CD14-positive monocyte (primary cell): ENCODE measurements at regions of chr5 and their contacts with region 1.

Region 1: GRCh38 chr5:32585446-32586275 is at the start of gene SUB1:
- DNase-seq: peak; percentile 92 to 93 (median 92)
- H3K4me3 ChIP-seq: peak within 1 kb of the TSS; percentile 61 to 97 (median 87)
- H3K4me3 Mint-ChIP-seq: peak within 1 kb of the TSS; percentile 99
- H3K27ac ChIP-seq: peak within 1 kb of the TSS; percentile 98
- H3K27ac Mint-ChIP-seq: peak within 1 kb of the TSS; percentile 91 to 99 (median 96)
- H3K4me1 ChIP-seq: peaks cover 60 to 67% of the 10 kb centered on the region in 2 donors
- H3K4me1 Mint-ChIP-seq: peaks cover 64% of the 10 kb centered on the region
- H3K27me3 ChIP-seq: no peaks in the 10 kb centered on the region
- H3K27me3 Mint-ChIP-seq: peaks cover 0 to 2% (median 0%) of the 10 kb centered on the region in 3 donors
- CTCF ChIP-seq: no peak
- polyA plus RNA-seq, gene SUB1: 74.3 to 454 (median 399) TPM

Region 2: DNA sequence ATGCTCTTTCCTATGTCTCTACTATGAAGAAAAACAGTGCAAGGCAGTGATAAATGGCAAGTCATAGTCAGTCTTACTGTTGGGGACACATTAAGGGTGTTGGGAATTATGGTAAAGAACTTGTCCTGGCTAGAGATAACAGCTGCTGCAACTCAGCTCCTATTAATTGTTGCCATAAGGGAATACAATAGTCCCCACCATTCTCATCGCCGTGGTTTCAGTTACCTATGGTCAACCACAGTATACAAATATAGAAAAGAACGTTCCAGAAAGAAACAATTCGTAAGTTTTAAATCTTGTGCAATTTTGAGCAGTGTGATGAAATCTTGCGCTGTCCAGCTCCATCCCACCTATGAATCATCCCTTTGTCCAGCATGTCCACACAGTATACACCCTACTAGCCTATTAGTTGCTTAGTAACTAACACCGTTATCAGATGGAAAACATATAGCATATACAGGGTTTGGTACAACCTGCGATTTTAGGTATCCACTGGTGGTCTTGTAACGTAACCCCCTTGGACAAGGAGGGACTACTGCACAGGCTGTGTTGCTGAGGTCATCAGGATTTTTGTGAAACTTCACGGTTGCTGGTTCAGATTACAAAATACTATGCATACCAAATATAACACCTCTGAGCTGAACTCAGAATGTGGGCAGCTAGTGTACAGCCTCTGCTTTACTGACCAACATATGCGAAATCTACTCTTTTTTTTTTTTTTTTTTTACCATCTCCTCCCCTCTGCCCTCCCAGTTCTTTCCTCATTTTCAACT is 194.7 kb before region 1 on chr5:
- intact Hi-C with region 1: loop called in 1 of 2 experiments (anchors 10 kb)
- DNase-seq: peak; percentile 80 to 92 (median 90)
- H3K4me3 ChIP-seq: no peak overlapping the region
- H3K4me3 Mint-ChIP-seq: peak overlapping the region in 1 of 2 donors; percentile 35
- H3K27ac ChIP-seq: peak overlapping the region; percentile 52 to 85
- H3K27ac Mint-ChIP-seq: peak overlapping the region; percentile 78 to 98 (median 98)
- H3K4me1 ChIP-seq: peaks cover 41 to 49% of the 10 kb centered on the region in 2 donors
- H3K4me1 Mint-ChIP-seq: peaks cover 39% of the 10 kb centered on the region
- H3K27me3 ChIP-seq: no peaks in the 10 kb centered on the region
- H3K27me3 Mint-ChIP-seq: no peaks in the 10 kb centered on the region
- CTCF ChIP-seq: no peak

Region 3: GRCh38 chr5:32444431-32445286 is 141.0 kb before region 1 on chr5 and contains the start of gene ZFR:
- intact Hi-C with region 1: loop called in 1 of 2 experiments (anchors 5 kb)
- DNase-seq: peak; percentile 90 to 93 (median 90)
- H3K4me3 ChIP-seq: peak within 1 kb of the TSS; percentile 65 to 90 (median 76)
- H3K4me3 Mint-ChIP-seq: peak within 1 kb of the TSS; percentile 84 to 93
- H3K27ac ChIP-seq: peak within 1 kb of the TSS; percentile 64 to 89
- H3K27ac Mint-ChIP-seq: peak within 1 kb of the TSS; percentile 87 to 95 (median 92)
- H3K4me1 ChIP-seq: peaks cover 39 to 47% of the 10 kb centered on the region in 2 donors
- H3K4me1 Mint-ChIP-seq: peaks cover 39% of the 10 kb centered on the region
- H3K27me3 ChIP-seq: no peaks in the 10 kb centered on the region
- H3K27me3 Mint-ChIP-seq: peaks cover 2 to 4% (median 2%) of the 10 kb centered on the region in 3 donors
- CTCF ChIP-seq: no peak
- polyA plus RNA-seq, gene ZFR: 29.8 to 81.8 (median 62.3) TPM

Region 4: GRCh38 chr5:32522429-32523143 is 63.1 kb before region 1 on chr5:
- intact Hi-C with region 1: loop called in 1 of 2 experiments (anchors 2 kb)
- DNase-seq: peak; percentile 95 to 98 (median 98)
- H3K4me3 ChIP-seq: no peak overlapping the region
- H3K4me3 Mint-ChIP-seq: peak overlapping the region in 1 of 2 donors; percentile 36
- H3K27ac ChIP-seq: peak overlapping the region; percentile 86 to 89
- H3K27ac Mint-ChIP-seq: peak overlapping the region; percentile 86 to 97 (median 96)
- H3K4me1 ChIP-seq: peaks cover 50 to 51% of the 10 kb centered on the region in 2 donors
- H3K4me1 Mint-ChIP-seq: peaks cover 51% of the 10 kb centered on the region
- H3K27me3 ChIP-seq: no peaks in the 10 kb centered on the region
- H3K27me3 Mint-ChIP-seq: peaks cover 0 to 10% (median 2%) of the 10 kb centered on the region in 3 donors
- CTCF ChIP-seq: no peak

Region 5: GRCh38 chr5:33092719-33093118 is 507.1 kb after region 1 on chr5:
- intact Hi-C with region 1: no loop called
- DNase-seq: no peak
- H3K4me3 ChIP-seq: no peak overlapping the region
- H3K4me3 Mint-ChIP-seq: no peak overlapping the region
- H3K27ac ChIP-seq: no peak overlapping the region
- H3K27ac Mint-ChIP-seq: no peak overlapping the region
- H3K4me1 ChIP-seq: no peaks in the 10 kb centered on the region
- H3K4me1 Mint-ChIP-seq: no peaks in the 10 kb centered on the region
- H3K27me3 ChIP-seq: no peaks in the 10 kb centered on the region
- H3K27me3 Mint-ChIP-seq: peaks cover 0 to 1% (median 0%) of the 10 kb centered on the region in 3 donors
- CTCF ChIP-seq: no peak